RWPE1 (cell line): ENCODE measurements at regions of chr13 and their contacts with region 1.

Region 1: GRCh38 chr13:24727731-24728601 is 36.0 kb upstream of the RNF17 start:
- DNase-seq: peak; percentile 88
- H3K27ac ChIP-seq: no peak overlapping the region
- CTCF ChIP-seq: peak; percentile 76

Region 2: DNA sequence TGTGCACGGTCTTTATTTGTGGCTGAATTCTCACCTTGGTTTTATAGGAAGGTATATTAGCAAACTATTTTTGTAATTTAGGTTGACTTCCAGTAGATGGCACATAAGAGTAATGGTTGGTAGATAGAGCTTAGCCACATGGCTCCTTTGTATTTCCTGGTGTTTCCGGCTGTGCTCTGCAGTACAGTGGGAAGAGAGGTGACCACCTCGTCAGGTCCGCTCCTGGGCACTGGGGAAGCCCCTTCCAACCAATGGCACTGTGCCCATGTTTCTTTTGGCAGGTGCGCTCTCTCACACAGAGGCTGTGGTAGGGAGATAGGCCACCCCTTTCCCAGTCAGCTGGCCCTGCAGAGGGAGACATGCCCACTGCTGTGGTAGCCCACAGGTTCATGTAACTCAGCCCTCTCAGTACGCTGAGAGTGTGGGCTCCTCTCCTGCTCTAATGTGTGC is 122.0 kb before region 1 on chr13:
- CTCF ChIA-PET with region 1: interaction called, 12 read pairs
- POLR2A ChIA-PET with region 1: no interaction called
- DNase-seq: no peak
- H3K27ac ChIP-seq: no peak overlapping the region
- CTCF ChIP-seq: no peak